HepG2 (cell line): ENCODE measurements at regions of chr10 and their contacts with region 1.

Region 1: DNA sequence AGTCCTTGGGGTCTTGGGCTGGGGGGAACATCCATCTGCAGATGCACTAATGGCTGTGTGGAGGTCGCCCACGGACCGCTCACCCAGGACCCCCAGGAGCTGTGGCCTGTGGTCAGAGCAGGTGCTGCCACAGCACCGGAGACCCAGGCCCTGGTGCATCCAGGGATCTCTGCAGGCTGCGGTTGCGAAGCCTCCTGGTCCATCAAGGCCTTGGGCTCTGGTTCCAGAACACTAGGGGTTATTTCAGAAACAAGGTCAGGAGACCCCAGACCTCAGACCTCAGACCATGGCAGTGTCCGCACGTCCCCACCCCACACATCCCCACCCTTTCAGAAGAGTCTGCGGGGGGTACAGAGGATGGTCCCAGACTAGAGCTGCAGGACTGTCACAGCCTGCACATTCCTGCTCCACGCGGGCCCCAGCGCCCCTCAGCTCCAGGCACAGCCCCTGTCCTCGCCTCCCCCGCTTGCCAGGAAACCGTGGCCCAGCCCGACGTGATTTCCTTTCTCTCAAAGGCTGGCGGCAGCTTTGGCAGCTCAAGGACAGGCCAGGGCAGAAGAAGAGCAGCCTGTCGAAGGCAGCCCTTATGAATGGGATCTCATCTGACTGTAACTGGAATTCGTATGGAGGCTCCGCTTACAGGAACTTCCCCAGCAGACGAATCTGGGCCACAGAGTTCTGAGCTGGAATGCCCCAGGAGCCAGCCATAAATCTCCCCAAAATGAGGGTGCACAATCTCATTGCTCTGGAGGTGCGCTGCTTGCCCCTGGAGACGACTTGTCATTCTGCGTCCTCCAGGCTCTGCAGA is 136.2 kb upstream of the RET start:
- DNase-seq: no peak
- ATAC-seq: no peak
- H3K4me3 ChIP-seq: no peak overlapping the region
- H3K27ac ChIP-seq: no peak overlapping the region
- H3K4me1 ChIP-seq: no peaks in the 10 kb centered on the region
- H3K27me3 ChIP-seq: peaks cover 3 to 24% of the 10 kb centered on the region in 2 experiments; a peak in 3 of 5 replicates
- CTCF ChIP-seq: no peak
- EP300 ChIP-seq: no peak
- POLR2A ChIP-seq: no peak
- RAD21 ChIP-seq: no peak

Region 2: DNA sequence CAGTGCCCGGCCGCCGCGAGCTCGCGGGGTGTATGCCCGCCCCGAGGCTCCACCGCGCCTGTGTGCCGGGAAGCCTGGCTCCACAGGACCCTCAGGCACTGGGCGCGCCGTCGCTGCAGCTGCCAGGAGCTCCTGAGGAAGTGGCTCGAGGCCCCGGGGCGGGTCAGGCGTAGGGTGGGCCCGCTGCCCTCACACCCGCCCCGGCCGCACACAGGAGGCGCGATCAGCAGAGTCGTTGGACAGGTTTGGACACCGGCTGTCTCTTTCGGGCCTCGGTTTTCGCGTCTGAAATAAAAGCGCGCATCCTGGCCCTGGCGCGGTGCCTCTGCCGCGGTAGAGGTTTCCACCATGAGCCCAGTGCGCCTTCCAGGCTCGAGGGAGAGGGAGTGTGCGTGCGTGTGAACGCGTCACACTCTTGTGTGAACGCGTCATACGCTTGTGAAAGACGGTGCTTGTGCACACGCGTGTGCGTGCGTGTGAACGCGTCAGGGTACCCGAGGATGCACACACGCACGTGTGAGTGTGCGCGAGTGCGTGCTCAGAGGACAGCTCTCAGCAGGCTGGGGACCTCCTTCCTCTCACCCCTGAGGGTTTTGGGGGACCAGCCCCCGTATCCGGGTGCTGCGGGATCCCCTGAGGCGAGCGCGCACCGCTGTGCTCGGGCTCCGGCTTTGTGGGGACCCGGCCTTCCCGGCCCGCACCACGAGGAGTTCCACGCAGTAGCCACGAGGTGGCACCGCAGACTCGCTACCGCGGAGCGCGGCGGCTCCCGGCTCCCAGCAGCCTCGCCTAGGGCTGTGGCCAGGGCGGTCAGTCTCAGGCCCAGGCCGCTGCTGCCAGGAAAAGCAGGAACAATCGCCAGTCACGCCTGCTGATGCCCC is 74.3 kb before region 1 on chr10:
- CTCF ChIA-PET with region 1: no interaction called
- POLR2A ChIA-PET with region 1: no interaction called
- in situ Hi-C with region 1: no loop called
- intact Hi-C with region 1: loop called (anchors 2 kb)
- DNase-seq: peak; percentile 30
- ATAC-seq: peak; percentile 100
- H3K4me3 ChIP-seq: peak overlapping the region in 1 of 3 experiments; percentile 16; a peak in 1 of 6 replicates
- H3K27ac ChIP-seq: no peak overlapping the region
- H3K4me1 ChIP-seq: no peaks in the 10 kb centered on the region
- H3K27me3 ChIP-seq: peaks cover 2 to 30% of the 10 kb centered on the region in 2 experiments; a peak in 4 of 5 replicates
- CTCF ChIP-seq: peak; percentile 86
- EP300 ChIP-seq: no peak
- POLR2A ChIP-seq: no peak
- RAD21 ChIP-seq: peak; percentile 80

Region 3: DNA sequence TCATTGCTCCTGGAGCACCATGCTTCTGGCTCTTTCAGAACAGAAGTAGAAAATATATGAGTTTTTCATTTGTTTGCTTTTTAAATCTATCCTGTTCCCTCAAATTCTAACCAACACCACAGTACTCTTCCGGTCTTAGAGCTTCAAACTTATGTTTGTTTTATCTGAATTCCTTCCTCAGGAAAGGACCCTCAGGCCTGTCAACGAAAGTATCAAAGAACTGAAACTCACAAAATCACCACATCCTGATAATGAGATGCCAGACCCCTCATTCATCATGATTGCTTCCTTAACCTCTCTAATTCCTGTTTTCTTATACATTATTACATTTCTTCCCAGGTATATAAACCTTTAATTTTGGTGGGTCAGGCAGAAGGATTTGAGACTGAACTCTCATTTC is 22.9 kb before region 1 on chr10:
- CTCF ChIA-PET with region 1: no interaction called
- POLR2A ChIA-PET with region 1: no interaction called
- in situ Hi-C with region 1: no loop called
- intact Hi-C with region 1: no loop called
- DNase-seq: no peak
- ATAC-seq: no peak
- H3K4me3 ChIP-seq: no peak overlapping the region
- H3K27ac ChIP-seq: no peak overlapping the region
- H3K4me1 ChIP-seq: no peaks in the 10 kb centered on the region
- H3K27me3 ChIP-seq: no peaks in the 10 kb centered on the region
- CTCF ChIP-seq: no peak
- EP300 ChIP-seq: no peak
- POLR2A ChIP-seq: no peak
- RAD21 ChIP-seq: no peak

Region 4: DNA sequence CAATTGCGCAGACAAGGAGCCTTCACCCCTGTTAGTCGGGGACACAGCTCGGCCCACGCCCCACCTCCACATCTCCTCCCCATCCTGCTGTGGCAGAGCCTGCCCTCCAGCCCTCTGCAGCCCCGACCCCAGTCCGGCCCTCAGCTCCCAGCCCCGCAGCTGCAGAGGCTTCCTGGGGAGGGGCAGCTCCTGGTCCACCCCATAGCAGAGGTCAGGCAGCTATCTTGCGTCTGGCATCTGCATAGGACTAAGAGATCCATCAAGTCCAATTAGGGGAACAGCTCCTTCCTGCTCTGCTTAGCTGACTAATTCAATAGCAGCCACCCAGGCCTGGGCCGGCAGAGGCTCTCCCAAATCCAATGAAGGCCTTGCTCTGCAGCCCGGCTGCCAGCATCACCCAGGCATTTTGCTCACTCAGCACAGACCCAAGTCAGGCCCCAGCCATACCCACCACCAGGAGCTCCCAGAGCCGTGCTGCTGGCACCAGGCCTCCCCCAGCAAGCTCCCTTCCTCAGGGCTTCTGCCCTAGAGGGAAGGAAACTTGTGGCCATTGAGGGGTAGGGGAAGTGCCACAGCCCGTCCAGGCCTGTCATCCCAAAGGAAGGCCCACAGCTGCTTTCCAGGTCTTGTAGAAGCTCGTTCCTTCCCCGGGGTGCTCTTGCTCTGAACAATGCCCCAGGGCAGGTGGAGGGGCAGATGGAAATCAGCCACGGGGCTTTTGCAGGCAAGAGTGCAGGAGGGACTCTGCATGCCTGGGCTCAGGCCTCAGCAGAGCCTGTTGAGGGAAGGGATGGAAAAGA is 30.0 kb after region 1 on chr10:
- CTCF ChIA-PET with region 1: no interaction called
- POLR2A ChIA-PET with region 1: no interaction called
- in situ Hi-C with region 1: no loop called
- intact Hi-C with region 1: no loop called
- DNase-seq: no peak
- ATAC-seq: no peak; the same call in 2 of the 3 replicates
- H3K4me3 ChIP-seq: no peak overlapping the region
- H3K27ac ChIP-seq: no peak overlapping the region
- H3K4me1 ChIP-seq: no peaks in the 10 kb centered on the region
- H3K27me3 ChIP-seq: peaks cover 0 to 4% of the 10 kb centered on the region in 2 experiments; a peak in 1 of 5 replicates
- CTCF ChIP-seq: no peak
- EP300 ChIP-seq: no peak
- POLR2A ChIP-seq: no peak
- RAD21 ChIP-seq: no peak